ENCODE measurements at regions of chr12 and their contacts with region 1.

Region 1: DNA sequence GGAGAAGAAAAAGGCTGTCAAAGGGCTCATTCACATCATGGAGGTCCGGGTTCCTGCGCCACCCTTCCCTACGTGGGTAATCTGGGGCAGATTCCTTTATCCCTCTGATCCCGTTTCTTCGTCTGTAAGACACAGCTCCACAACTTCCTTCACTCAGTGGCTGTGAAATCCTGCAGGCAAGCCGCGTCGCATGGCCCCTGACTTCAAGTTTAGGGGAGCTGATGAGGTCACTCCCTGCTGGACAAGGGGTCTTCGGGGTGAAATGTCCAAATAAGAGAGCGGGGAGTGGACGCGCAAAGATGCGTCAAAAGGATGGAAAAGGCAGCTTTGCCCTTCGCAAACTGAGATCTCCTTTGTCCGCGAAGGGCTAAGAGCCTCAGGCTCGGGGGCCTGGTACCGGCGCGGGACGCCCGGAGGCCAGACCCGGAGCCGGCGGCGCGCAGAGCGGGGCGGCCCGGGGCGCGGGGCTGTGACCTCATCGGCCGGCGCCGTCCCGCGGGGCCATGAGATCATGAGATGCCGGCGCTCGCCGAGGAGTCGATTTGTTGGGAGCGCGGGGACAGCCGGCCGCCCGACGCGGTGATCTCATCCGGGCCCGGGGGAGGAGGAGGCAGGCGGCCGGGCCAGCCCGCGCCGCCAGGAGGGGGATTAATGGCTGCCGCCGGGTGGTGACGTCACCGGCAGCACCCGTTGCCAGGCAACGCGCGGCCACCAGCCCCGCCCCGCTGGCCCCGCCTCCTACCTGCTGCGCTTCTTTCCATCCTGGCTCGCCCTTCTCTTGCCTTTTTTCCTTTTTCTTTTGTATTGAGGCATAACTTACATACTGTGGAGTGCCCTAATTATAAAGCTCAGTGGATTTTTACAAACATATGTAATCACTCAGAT is 62.1 kb downstream of the HRK start:
- DNase-seq: peak; percentile 92 to 93 (median 93)
- H3K4me3 ChIP-seq: peak overlapping the region; percentile 67 to 86
- H3K4me3 Mint-ChIP-seq: peak overlapping the region; percentile 92 to 96 (median 93)
- H3K27ac ChIP-seq: peak overlapping the region; percentile 87
- H3K27ac Mint-ChIP-seq: peak overlapping the region; percentile 96 to 100 (median 98)
- H3K4me1 ChIP-seq: peaks cover 17% of the 10 kb centered on the region
- H3K4me1 Mint-ChIP-seq: peaks cover 10 to 31% (median 22%) of the 10 kb centered on the region in 4 donors
- H3K27me3 ChIP-seq: no peaks in the 10 kb centered on the region
- H3K27me3 Mint-ChIP-seq: peaks cover 0 to 2% of the 10 kb centered on the region in 2 donors

Region 2: DNA sequence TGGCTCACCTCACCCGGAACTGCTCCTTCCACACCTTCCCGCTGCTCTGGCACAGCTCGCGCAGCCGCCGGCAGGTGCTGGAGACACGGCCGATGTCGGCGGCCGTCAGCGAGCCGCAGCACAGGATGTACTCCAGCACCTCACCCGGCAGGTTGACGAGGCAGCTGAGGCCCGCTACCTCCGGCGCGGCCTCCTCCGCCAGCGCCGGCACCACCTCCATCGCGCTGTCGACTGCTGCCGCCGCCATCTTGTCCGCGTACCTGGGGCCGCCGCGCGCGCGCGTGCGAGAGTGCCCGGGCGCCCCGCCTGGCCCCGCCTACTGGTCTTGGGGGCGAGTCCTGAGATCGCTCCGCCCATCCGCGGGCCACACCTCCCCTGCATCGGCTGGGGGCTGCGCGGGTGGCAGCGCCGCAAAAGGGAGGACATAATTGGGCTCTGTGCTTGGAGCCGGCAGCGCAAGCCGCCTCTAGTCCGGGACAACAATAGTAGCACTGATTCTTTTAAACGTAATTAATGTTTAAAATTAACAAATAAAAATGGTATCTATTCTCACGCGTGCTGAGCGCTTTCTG is 371.1 kb after region 1 on chr12 and contains the start of gene FBXO21:
- CTCF ChIA-PET with region 1: no interaction called
- POLR2A ChIA-PET with region 1: no interaction called
- intact Hi-C with region 1: loop called (anchors 1 kb)
- DNase-seq: peak; percentile 92 to 96 (median 93)
- H3K4me3 ChIP-seq: peak within 1 kb of the TSS; percentile 66 to 81
- H3K4me3 Mint-ChIP-seq: peak within 1 kb of the TSS; percentile 94 to 99 (median 96)
- H3K27ac ChIP-seq: peak within 1 kb of the TSS; percentile 67
- H3K27ac Mint-ChIP-seq: peak within 1 kb of the TSS; percentile 89 to 97 (median 95)
- H3K4me1 ChIP-seq: peaks cover 26% of the 10 kb centered on the region
- H3K4me1 Mint-ChIP-seq: peaks cover 19 to 50% (median 29%) of the 10 kb centered on the region in 4 donors
- H3K27me3 ChIP-seq: no peaks in the 10 kb centered on the region
- H3K27me3 Mint-ChIP-seq: no peaks in the 10 kb centered on the region
- total RNA-seq, gene FBXO21: 41.9 to 47.8 TPM

Region 3: DNA sequence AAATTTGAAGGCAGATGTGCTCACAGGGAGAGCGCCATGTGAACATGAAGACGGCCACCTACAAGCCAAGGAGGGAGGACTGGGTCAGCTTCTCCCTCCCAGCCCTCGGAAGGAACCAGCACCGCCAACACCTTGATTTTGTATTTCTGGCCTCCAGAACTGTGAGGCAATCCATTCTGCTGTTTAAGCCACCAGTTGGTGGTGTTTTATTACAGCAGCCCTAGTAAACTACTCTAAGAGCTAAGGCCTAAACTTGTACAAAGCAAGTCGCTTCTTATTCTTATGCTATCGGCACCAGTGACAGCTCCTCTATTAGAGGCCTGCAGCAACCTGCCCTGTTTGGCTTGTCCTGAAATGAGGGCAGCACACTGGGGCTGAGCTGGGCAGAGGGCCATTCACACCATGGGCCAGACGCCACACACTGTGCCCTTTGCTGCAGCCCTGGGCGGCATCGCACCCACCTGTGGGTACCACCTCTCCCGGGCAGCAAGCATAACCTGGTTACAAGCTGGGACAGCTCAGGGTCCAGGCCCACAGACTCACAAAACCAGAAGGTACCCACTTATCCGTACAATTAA is 479.5 kb after region 1 on chr12:
- CTCF ChIA-PET with region 1: no interaction called
- POLR2A ChIA-PET with region 1: no interaction called
- intact Hi-C with region 1: no loop called
- DNase-seq: no peak
- H3K4me3 ChIP-seq: no peak overlapping the region
- H3K4me3 Mint-ChIP-seq: no peak overlapping the region
- H3K27ac ChIP-seq: no peak overlapping the region
- H3K27ac Mint-ChIP-seq: no peak overlapping the region
- H3K4me1 ChIP-seq: no peaks in the 10 kb centered on the region
- H3K4me1 Mint-ChIP-seq: no peaks in the 10 kb centered on the region
- H3K27me3 ChIP-seq: no peaks in the 10 kb centered on the region
- H3K27me3 Mint-ChIP-seq: peaks cover 3 to 4% of the 10 kb centered on the region in 2 donors

Measured in CD4-positive, alpha-beta memory T cell (primary cell).